Endothelial cell of umbilical vein (primary cell): ENCODE measurements at regions of chr9 and their contacts with region 1.

Region 1: GRCh38 chr9:77977210-77977611 is 54.4 kb downstream of the GNAQ start:
- DNase-seq: peak; percentile 94
- H3K4me3 ChIP-seq: peak overlapping the region in 1 of 3 experiments; percentile 23
- H3K27ac ChIP-seq: peak overlapping the region; percentile 44
- H3K4me1 ChIP-seq: peaks cover 40% of the 10 kb centered on the region
- H3K27me3 ChIP-seq: no peaks in the 10 kb centered on the region
- CTCF ChIP-seq: peak; percentile 71 to 76
- POLR2A ChIP-seq: peak; percentile 51

Region 2: DNA sequence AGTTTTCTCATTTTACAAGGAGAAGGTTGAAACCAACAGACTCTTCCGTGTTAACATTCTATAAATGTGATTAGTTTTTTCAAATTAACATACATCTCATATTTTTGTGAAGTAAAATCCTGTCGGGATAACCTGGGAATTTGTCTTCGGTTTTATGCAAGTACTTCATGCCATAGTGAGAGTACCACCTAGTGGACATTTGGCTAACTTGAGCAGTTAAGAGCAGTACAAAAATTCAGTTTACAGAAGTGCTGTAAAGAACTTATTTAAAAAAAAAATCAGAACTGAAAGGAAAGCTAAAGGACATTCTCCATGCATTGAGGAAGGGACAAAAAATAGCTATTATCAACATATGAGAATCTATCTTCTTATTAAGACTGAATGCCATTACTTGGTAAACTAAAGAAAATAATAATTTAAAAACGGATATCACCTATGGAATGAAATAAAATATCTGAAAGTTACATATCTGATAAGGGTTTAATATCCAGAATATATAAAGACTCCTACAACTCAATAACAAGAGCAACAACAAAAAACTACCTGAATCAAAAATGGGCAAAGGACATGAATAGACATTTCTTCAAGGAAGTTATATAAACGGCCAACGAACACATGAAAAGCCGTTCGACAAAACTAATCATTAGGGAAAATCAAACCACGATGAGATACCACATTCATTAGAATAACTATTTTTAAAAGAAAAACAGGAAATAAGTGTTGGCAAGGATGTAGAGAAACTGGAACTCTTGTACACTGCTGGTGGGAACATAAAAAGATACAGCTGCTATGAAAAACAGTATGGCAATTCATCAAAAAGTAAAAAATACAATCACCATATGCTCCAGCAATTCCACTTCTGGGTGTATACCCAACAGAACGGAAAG is 212.1 kb before region 1 on chr9:
- CTCF ChIA-PET with region 1: interaction called, 11 read pairs
- POLR2A ChIA-PET with region 1: no interaction called
- dilution Hi-C with region 1: no loop called
- intact Hi-C with region 1: loop called (anchors 1 kb)
- DNase-seq: peak; percentile 58
- H3K4me3 ChIP-seq: no peak overlapping the region
- H3K27ac ChIP-seq: peak overlapping the region; percentile 11
- H3K4me1 ChIP-seq: peaks cover 12% of the 10 kb centered on the region
- H3K27me3 ChIP-seq: no peaks in the 10 kb centered on the region
- CTCF ChIP-seq: peak; percentile 35 to 46
- POLR2A ChIP-seq: no peak

Region 3: DNA sequence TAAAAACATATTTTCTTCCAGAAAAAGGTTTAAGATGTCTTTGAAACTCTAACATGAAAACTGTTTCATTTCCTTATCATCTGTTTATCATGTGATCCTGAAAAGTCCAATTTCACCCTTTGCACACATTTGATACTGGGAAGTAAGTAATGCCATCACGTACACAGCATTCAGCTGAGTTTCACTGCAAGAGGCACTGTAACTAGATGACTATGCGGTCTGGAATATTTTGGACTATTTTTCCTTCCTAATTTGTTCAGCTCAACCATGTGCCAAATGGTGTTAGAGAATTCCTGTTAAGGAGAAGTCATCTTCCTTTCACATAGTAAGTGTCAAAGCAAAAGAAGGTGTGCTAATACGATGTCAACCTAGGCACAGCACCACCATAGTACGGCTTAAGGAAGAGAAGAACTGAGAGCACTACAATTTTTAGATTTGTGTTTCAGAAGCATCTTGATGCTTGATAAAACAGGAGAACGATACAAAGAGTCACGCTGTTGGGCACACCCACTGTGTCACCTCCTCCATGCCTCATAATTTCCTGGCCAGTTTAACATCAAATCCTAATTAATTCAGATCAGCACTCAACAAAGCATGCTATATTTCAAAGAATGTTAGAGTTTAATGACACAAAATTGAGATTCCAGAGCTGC is 23.1 kb before region 1 on chr9:
- CTCF ChIA-PET with region 1: interaction called, 12 read pairs
- POLR2A ChIA-PET with region 1: no interaction called
- dilution Hi-C with region 1: no loop called
- intact Hi-C with region 1: no loop called
- DNase-seq: peak; percentile 41
- H3K4me3 ChIP-seq: no peak overlapping the region
- H3K27ac ChIP-seq: no peak overlapping the region
- H3K4me1 ChIP-seq: peaks cover 39% of the 10 kb centered on the region
- H3K27me3 ChIP-seq: no peaks in the 10 kb centered on the region
- CTCF ChIP-seq: no peak
- POLR2A ChIP-seq: no peak

Region 4: DNA sequence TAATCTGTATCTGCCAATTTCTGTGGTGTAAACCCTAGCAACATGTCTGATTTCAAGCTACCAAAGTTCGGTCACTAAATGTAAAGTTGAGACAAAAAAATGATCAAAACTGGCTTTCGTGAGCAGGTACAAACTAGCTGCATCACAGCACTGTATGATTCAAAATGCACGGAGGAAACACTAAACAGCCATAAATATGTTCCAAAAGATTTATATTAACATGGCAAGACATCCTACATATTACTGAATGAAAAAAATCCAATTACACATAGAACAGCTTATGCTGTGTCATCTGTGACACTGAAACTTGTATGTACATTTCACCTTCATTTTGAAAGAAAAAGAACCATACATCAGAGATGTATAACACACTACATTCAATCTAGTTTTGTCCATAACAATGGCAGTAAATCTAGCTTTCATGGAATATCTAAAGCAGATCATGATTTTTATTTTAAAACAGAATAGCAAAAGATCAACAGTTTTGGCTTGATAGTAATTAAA is 40.0 kb after region 1 on chr9:
- CTCF ChIA-PET with region 1: interaction called, 81 read pairs
- POLR2A ChIA-PET with region 1: interaction called, 4 read pairs
- dilution Hi-C with region 1: no loop called
- intact Hi-C with region 1: no loop called
- DNase-seq: no peak
- H3K4me3 ChIP-seq: no peak overlapping the region
- H3K27ac ChIP-seq: no peak overlapping the region
- H3K4me1 ChIP-seq: peaks cover 23% of the 10 kb centered on the region
- H3K27me3 ChIP-seq: no peaks in the 10 kb centered on the region
- CTCF ChIP-seq: no peak
- POLR2A ChIP-seq: no peak

Region 5: DNA sequence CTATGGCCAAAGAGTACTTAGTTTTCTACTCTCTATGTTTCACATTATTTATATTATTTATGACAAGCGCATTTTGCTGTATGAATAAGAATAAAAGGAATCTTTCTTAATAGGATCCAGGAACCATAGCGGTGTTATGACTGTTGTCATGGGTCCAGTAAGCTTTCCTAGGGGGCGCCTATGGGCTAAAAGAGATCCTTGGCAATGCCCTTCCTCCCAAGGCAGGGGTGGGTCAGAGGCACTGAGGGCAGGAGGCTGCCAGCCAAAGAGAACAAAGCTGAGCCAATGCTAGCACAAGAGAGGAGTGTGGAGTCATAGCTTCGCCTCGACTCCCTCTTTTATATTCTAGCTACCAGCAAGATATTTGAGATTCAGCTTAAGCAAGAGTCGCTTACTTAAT is 152.8 kb after region 1 on chr9:
- CTCF ChIA-PET with region 1: interaction called, 134 read pairs
- POLR2A ChIA-PET with region 1: no interaction called
- dilution Hi-C with region 1: no loop called
- intact Hi-C with region 1: no loop called
- DNase-seq: peak; percentile 87
- H3K4me3 ChIP-seq: no peak overlapping the region
- H3K27ac ChIP-seq: no peak overlapping the region
- H3K4me1 ChIP-seq: peaks cover 11% of the 10 kb centered on the region
- H3K27me3 ChIP-seq: no peaks in the 10 kb centered on the region
- CTCF ChIP-seq: peak; percentile 36 to 55
- POLR2A ChIP-seq: no peak